ENCODE measurements at regions of chr15 and their contacts with region 1.

Region 1: GRCh38 chr15:71114896-71115554 is at the start of gene THSD4:
- DNase-seq: peak; percentile 75 to 92
- H3K4me3 ChIP-seq: peak within 1 kb of the TSS; percentile 60 to 73 (median 66)
- H3K27ac ChIP-seq: peak within 1 kb of the TSS; percentile 65 to 86 (median 77)
- H3K4me1 ChIP-seq: peaks cover 0 to 22% (median 15%) of the 10 kb centered on the region in 4 donors
- H3K27me3 ChIP-seq: peaks cover 0 to 32% (median 6%) of the 10 kb centered on the region in 3 donors
- CTCF ChIP-seq: peak in 6 of 7 experiments; percentile 20 to 97 (median 92)
- EP300 ChIP-seq: no peak
- POLR2A ChIP-seq: no peak
- total RNA-seq, gene THSD4: 18.0 to 79.4 (median 23.5) TPM

Region 2: DNA sequence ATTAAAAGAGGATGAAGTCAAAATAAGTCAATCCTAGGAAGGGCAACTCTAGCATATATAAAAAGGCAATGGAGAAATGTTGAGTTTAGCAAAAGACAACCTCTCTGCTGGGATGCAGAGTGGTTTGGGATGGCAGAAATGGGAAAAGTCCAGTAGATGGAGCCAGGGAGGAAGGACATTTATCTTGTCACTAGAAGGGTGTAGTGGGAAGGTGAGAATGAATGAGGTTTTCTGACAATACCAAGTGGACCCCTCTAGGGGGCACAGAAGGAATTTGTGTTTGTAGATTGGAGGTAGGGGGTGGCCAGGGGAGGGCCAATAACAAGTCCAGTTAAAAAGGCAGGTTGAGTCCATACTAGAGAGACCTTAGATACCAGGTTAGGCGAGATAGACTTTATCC is 80.2 kb after region 1 on chr15:
- intact Hi-C with region 1: no loop called
- DNase-seq: no peak
- H3K4me3 ChIP-seq: no peak overlapping the region
- H3K27ac ChIP-seq: no peak overlapping the region
- H3K4me1 ChIP-seq: peaks cover 0 to 12% (median 3%) of the 10 kb centered on the region in 4 donors
- H3K27me3 ChIP-seq: no peaks in the 10 kb centered on the region
- CTCF ChIP-seq: no peak
- EP300 ChIP-seq: no peak
- POLR2A ChIP-seq: no peak

Region 3: DNA sequence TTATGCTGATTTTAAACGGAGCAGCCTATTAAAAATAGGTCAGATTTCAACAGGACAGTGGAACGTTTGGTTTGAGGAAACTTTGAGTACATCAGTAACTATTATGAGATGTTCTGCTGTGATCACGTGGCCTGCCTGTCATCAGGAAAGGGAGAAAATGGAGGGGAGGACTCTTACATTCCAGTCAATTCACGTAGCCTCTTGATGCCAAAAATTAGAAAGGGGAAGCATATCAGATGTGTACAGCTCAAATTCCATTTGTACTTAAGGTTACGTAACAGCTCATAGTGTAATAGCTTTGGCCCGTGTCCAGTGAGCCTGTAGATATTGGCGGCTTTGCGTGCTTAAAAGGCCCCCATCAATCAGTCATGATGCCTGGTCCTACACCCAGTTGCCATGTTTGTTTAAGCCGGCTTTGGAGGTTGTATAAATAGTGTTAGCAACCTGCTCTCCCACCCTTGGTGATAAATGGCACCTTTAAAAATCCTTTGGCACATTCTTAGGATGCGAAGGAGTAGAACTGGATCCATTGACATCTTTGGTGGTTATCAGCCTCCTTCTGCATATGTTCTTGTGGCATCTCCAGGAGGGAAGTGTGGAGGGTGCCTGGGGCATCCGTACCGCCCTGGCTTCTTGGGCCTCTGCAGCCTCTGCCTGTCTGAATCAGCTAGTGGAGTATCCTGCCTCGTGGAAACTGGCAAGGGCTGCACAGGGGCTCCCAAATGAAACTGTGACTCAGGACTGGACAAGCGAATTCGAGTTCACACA is 164.1 kb after region 1 on chr15:
- intact Hi-C with region 1: no loop called
- DNase-seq: peak; percentile 90 to 95
- H3K4me3 ChIP-seq: no peak overlapping the region
- H3K27ac ChIP-seq: peak overlapping the region; percentile 43 to 73 (median 65)
- H3K4me1 ChIP-seq: peaks cover 15 to 32% (median 25%) of the 10 kb centered on the region in 4 donors
- H3K27me3 ChIP-seq: no peaks in the 10 kb centered on the region
- CTCF ChIP-seq: no peak
- EP300 ChIP-seq: no peak
- POLR2A ChIP-seq: no peak

Region 4: DNA sequence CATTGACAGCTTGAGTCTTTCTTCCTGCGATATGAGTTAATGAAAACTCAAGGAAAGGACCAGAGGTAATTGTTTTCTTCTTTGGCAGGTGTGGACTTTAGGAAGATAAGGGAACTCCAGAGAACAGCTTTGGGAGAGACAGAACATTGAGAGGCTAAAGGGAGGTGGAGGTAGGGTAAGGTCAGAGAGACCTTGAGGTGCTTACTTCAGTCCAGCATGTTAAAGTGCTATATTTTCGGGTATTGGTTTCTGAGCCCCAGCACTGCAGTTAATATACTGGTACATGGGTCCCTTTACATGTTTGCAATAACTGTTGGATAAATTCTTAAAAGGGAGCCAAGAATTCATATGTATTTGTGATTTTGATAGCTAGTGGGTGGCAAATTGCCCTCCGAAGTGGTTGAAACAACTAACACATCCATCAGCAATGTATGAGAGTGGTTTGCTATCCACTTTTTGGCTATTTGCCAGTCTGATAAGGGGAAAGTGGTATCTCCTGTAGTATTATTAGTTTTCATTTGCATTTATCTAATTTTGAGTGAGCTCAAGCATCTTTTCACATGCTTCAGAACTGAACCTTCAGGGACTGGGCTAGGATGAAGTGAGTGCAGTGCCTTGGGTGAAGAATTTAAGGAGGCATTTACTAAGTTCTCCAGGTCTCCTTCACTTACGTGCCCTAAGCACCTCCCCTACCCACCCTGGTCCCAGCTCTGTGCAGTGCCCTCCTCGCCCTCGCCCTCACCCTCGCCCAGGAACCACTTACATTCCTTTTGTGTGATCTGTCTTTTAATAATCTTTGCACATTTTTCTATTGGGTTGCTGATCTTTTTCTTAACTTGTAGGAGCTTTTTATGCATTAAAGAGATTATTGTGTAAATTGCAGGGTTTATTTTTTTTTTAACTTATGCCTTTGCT is 322.6 kb after region 1 on chr15:
- intact Hi-C with region 1: loop called (anchors 10 kb)
- DNase-seq: no peak
- H3K4me3 ChIP-seq: no peak overlapping the region
- H3K27ac ChIP-seq: peak overlapping the region in 1 of 5 donors; percentile 17
- H3K4me1 ChIP-seq: peaks cover 0 to 7% (median 3%) of the 10 kb centered on the region in 4 donors
- H3K27me3 ChIP-seq: no peaks in the 10 kb centered on the region
- CTCF ChIP-seq: no peak
- EP300 ChIP-seq: no peak
- POLR2A ChIP-seq: no peak

Measured in stomach (tissue), 19 donors.